Activated T-helper 2 cell treated with anti-CD3 and anti-CD28 coated beads, Interferon-gamma antibody, Interleukin-2, Interleukin-4, amounts not matched to agents 10 μg/mL and 5 μg/mL and 100 μg/mL, durations not matched to agents 14 hours and 24 hours and 36 hours (primary cell): ENCODE measurements at regions of chr6 and their contacts with region 1.

Region 1: GRCh38 chr6:90393232-90393884 is 96.7 kb upstream of the BACH2 start:
- DNase-seq: peak; percentile 71
- H3K4me3 Mint-ChIP-seq: no peak overlapping the region
- H3K27ac Mint-ChIP-seq: peak overlapping the region; percentile 64
- H3K4me1 Mint-ChIP-seq: peaks cover 74% of the 10 kb centered on the region
- H3K27me3 Mint-ChIP-seq: no peaks in the 10 kb centered on the region

Region 2: DNA sequence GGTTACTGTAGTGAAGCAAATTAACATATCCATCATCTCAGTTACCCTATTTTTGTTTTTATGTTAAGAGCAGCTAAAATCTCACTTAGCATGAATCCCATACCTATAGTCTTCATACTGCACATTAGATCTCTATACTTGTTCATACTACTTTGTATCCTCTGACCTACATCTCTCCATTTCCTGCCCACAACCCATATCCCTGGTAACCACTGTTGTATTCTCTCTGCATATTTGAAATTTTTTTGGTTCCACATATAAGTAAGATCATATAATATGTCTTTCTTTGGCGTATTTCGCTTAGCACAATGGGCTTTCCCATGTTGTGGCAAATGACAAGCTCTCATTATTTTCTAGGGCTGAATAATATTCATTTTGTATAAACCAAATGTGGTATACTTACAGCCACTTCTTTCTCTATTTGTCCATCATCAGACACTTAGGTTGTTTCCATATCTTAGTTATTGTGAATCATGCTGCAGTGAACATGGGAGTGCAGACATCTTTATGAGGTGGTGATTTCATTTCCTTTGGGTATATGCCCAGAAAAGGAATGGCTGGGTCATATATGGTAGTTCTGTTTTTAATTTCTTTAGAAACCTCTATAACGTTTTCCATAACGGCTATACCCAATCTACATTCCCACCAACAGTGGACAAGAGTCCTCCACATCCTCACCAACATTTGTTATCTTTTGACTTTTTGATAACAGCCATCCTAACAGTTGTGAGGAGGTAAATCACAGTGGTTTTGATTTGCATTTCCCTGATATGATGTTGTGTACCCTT is 136.5 kb before region 1 on chr6:
- intact Hi-C with region 1: loop called (anchors 1 kb)
- DNase-seq: no peak
- H3K4me3 Mint-ChIP-seq: no peak overlapping the region
- H3K27ac Mint-ChIP-seq: peak overlapping the region; percentile 90
- H3K4me1 Mint-ChIP-seq: peaks cover 69% of the 10 kb centered on the region
- H3K27me3 Mint-ChIP-seq: no peaks in the 10 kb centered on the region

Region 3: DNA sequence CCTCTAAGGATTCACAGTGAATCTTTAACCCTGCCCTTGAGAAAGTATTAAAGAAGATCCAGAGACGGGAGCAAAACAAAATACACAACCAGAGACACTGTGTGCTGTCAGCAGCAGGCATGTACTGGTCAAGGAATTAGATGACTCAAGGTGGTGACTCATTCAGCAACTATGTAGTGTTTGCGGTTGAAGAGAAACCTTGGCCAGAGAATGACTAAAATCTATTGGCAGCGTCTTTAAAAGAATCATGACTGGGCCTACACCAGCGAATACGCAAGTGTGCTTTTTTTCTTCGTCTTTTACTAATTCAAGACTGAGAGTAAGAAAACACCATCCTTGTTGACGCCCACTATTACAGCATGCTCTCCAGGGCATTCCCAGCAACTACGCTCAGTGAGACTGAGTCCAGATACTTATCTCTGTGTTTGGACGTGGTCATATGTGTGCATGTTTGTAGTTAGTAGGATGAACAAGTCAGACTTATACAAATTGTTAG is 24.3 kb before region 1 on chr6:
- intact Hi-C with region 1: loop called (anchors 1 kb)
- DNase-seq: peak; percentile 29
- H3K4me3 Mint-ChIP-seq: no peak overlapping the region
- H3K27ac Mint-ChIP-seq: peak overlapping the region; percentile 62
- H3K4me1 Mint-ChIP-seq: peaks cover 30% of the 10 kb centered on the region
- H3K27me3 Mint-ChIP-seq: peaks cover 7% of the 10 kb centered on the region

Region 4: GRCh38 chr6:90425161-90425641 is 31.8 kb after region 1 on chr6:
- intact Hi-C with region 1: loop called (anchors 1 kb)
- DNase-seq: no peak
- H3K4me3 Mint-ChIP-seq: peak overlapping the region; percentile 52
- H3K27ac Mint-ChIP-seq: peak overlapping the region; percentile 95
- H3K4me1 Mint-ChIP-seq: peaks cover 28% of the 10 kb centered on the region
- H3K27me3 Mint-ChIP-seq: no peaks in the 10 kb centered on the region

Region 5: GRCh38 chr6:90458353-90459224 is 65.2 kb after region 1 on chr6:
- intact Hi-C with region 1: loop called (anchors 1 kb)
- DNase-seq: peak; percentile 68
- H3K4me3 Mint-ChIP-seq: peak overlapping the region; percentile 27
- H3K27ac Mint-ChIP-seq: peak overlapping the region; percentile 95
- H3K4me1 Mint-ChIP-seq: peaks cover 76% of the 10 kb centered on the region
- H3K27me3 Mint-ChIP-seq: no peaks in the 10 kb centered on the region

Region 6: DNA sequence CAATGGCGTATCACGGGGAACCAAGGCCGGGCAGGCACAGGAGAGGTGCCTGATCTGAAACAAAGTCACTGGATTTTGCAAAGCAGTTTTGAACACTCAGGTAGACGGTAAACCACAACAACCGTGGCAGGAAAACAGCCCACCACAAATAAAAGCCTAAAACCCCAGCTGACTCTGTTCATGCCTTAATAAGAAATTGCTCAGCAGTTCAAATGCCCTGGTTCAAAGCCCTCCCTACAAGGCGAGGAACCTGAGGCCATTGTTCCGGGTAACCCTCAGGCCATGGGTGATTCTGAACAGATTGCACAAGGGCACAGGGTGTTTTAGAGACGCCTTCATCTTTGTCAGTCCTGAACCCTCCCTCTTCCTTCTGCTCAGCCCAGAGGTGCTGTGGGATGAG is 79.4 kb after region 1 on chr6:
- intact Hi-C with region 1: loop called (anchors 1 kb)
- DNase-seq: peak; percentile 57
- H3K4me3 Mint-ChIP-seq: peak overlapping the region; percentile 72
- H3K27ac Mint-ChIP-seq: peak overlapping the region; percentile 93
- H3K4me1 Mint-ChIP-seq: peaks cover 94% of the 10 kb centered on the region
- H3K27me3 Mint-ChIP-seq: no peaks in the 10 kb centered on the region